B cell (primary cell): ENCODE measurements at regions of chr2 and their contacts with region 1.

Region 1: DNA sequence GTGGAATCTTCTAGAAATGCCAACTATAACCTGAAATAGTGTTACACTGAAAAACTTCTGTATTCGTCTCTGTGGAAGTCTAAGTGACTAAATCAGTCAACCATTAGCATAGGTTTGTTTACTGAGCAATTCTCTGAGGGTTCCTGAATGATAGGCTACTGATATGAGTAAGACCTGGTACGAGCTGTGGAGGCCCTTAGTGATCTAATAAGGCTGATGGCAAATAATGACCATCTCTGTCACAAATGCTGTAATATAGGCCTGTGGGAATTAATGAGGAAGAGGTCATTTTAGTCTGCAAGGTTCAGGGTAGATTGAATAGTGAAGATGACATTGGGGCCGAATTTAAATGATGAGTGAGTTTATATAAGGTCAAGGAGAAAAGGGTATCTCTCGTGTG is 82.5 kb downstream of the MGAT5 start:
- DNase-seq: no peak
- ATAC-seq: no peak
- H3K4me3 ChIP-seq: no peak overlapping the region
- H3K4me3 Mint-ChIP-seq: no peak overlapping the region
- H3K27ac ChIP-seq: peak overlapping the region in 1 of 2 donors; percentile 42
- H3K27ac Mint-ChIP-seq: peak overlapping the region; percentile 64
- H3K4me1 ChIP-seq: peaks cover 9 to 24% of the 10 kb centered on the region in 2 donors
- H3K4me1 Mint-ChIP-seq: peaks cover 65% of the 10 kb centered on the region
- H3K27me3 ChIP-seq: no peaks in the 10 kb centered on the region
- H3K27me3 Mint-ChIP-seq: no peaks in the 10 kb centered on the region
- CTCF ChIP-seq: no peak

Region 2: DNA sequence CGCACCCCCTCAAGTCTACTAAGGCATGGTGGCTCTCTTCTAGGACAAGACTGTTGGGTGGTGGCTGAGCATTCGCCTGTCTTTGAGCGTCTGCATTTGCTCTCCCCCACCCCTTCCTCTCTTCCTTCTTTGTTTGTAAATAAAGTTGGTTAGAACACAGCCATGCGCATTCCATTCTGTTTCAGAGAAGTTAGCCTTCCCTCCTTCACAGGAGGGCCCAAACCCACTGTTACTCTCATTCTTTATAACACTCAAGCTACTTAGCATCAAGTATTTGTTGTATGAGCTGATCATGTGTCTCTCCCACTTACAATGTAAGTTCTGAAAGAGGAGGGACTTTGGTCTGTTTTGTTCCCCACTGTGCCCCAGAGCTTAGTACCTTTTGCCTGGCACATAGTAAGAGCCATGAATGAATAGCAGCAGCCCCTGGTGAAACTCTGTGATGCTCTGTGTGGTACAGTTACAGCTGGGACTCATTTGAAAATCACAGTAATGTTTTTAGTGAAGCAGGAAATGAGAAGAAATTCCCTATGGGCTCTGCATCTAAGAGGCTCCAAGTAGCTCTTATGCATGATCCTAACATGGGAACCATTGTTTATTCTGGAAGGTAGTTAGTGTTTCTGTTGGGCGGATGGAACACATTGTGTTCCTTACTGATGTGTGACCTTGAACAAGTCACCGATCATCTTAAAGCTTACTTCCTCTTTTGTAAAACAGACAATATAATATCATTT is 74.8 kb before region 1 on chr2:
- CTCF ChIA-PET with region 1: interaction called, 3 read pairs
- POLR2A ChIA-PET with region 1: no interaction called
- intact Hi-C with region 1: loop called (anchors 5 kb)
- DNase-seq: peak; percentile 78
- ATAC-seq: peak; percentile 55
- H3K4me3 ChIP-seq: peak overlapping the region in 1 of 5 experiments; percentile 22
- H3K4me3 Mint-ChIP-seq: peak overlapping the region; percentile 80
- H3K27ac ChIP-seq: peak overlapping the region; percentile 94 to 96
- H3K27ac Mint-ChIP-seq: peak overlapping the region; percentile 99
- H3K4me1 ChIP-seq: peaks cover 92 to 94% of the 10 kb centered on the region in 2 donors
- H3K4me1 Mint-ChIP-seq: peaks cover 86% of the 10 kb centered on the region
- H3K27me3 ChIP-seq: no peaks in the 10 kb centered on the region
- H3K27me3 Mint-ChIP-seq: no peaks in the 10 kb centered on the region
- CTCF ChIP-seq: no peak

Region 3: DNA sequence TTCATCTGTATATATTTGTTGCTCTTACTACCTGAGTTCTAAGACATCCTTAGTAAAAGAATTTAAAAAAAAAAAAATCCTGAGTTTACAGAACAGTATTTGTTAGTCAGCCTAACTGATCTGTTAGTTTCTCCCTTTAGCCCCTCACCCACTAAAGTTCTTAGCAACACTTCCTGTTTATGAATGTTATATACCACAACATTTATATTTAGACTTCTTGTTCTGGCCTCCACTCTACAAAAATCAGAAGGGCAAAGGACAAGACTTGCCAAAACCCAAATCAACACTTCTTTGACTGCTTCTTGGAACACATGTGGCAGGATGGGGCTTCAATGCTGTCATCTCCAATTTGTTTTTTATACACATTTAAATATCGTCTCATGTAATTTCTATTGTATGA is 11.4 kb before region 1 on chr2:
- CTCF ChIA-PET with region 1: interaction called, 7 read pairs
- POLR2A ChIA-PET with region 1: no interaction called
- intact Hi-C with region 1: loop called (anchors 1 kb)
- DNase-seq: peak; percentile 70
- ATAC-seq: peak; percentile 68
- H3K4me3 ChIP-seq: peak overlapping the region in 1 of 5 experiments; percentile 17
- H3K4me3 Mint-ChIP-seq: peak overlapping the region; percentile 66
- H3K27ac ChIP-seq: peak overlapping the region; percentile 42 to 61
- H3K27ac Mint-ChIP-seq: peak overlapping the region; percentile 90
- H3K4me1 ChIP-seq: peaks cover 58 to 83% of the 10 kb centered on the region in 2 donors
- H3K4me1 Mint-ChIP-seq: peaks cover 90% of the 10 kb centered on the region
- H3K27me3 ChIP-seq: no peaks in the 10 kb centered on the region
- H3K27me3 Mint-ChIP-seq: no peaks in the 10 kb centered on the region
- CTCF ChIP-seq: no peak

Region 4: DNA sequence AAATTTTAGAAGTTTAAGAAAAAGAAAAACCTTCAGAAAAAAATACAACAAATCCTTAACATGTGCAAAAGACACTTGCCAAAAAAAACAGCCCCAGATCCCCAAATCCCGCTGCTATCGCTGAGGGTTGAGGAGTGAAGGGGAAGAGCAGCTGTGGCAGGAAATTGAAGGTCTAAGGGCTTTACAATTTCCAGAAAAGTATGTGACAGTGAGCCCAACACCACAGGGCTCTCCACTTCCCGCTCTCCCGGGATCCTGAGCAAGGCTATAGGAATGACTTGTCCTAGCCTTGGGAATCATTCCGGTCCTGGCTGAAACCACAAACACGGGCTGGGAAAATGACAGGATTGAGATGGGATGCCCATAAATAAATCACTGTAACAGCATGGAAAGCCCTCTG is 191.0 kb after region 1 on chr2:
- CTCF ChIA-PET with region 1: no interaction called
- POLR2A ChIA-PET with region 1: no interaction called
- intact Hi-C with region 1: no loop called
- DNase-seq: no peak
- ATAC-seq: no peak
- H3K4me3 ChIP-seq: no peak overlapping the region
- H3K4me3 Mint-ChIP-seq: no peak overlapping the region
- H3K27ac ChIP-seq: no peak overlapping the region
- H3K27ac Mint-ChIP-seq: no peak overlapping the region
- H3K4me1 ChIP-seq: no peaks in the 10 kb centered on the region
- H3K4me1 Mint-ChIP-seq: no peaks in the 10 kb centered on the region
- H3K27me3 ChIP-seq: no peaks in the 10 kb centered on the region
- H3K27me3 Mint-ChIP-seq: no peaks in the 10 kb centered on the region
- CTCF ChIP-seq: no peak

Region 5: GRCh38 chr2:134621939-134622705 is 285.8 kb after region 1 on chr2:
- CTCF ChIA-PET with region 1: no interaction called
- POLR2A ChIA-PET with region 1: no interaction called
- intact Hi-C with region 1: no loop called
- DNase-seq: no peak
- ATAC-seq: no peak
- H3K4me3 ChIP-seq: peak overlapping the region in 4 of 5 experiments; percentile 6 to 39 (median 26)
- H3K4me3 Mint-ChIP-seq: peak overlapping the region; percentile 57
- H3K27ac ChIP-seq: no peak overlapping the region
- H3K27ac Mint-ChIP-seq: peak overlapping the region; percentile 5
- H3K4me1 ChIP-seq: peaks cover 0 to 16% of the 10 kb centered on the region in 2 donors
- H3K4me1 Mint-ChIP-seq: peaks cover 24% of the 10 kb centered on the region
- H3K27me3 ChIP-seq: no peaks in the 10 kb centered on the region
- H3K27me3 Mint-ChIP-seq: no peaks in the 10 kb centered on the region
- CTCF ChIP-seq: no peak